ENCODE measurements at regions of chr12 and their contacts with region 1.

Region 1: GRCh38 chr12:53675651-53676453 is at the start of gene ATP5MC2:
- DNase-seq: peak; percentile 97 to 98
- H3K4me3 ChIP-seq: peak within 1 kb of the TSS; percentile 41
- H3K4me3 Mint-ChIP-seq: peak within 1 kb of the TSS; percentile 82
- H3K27ac Mint-ChIP-seq: peak within 1 kb of the TSS; percentile 87
- H3K4me1 ChIP-seq: 0 out of 2 replicates have a peak, but pooled peaks cover 5% of the 10 kb centered on the region
- H3K4me1 Mint-ChIP-seq: no peaks in the 10 kb centered on the region
- H3K27me3 ChIP-seq: no peaks in the 10 kb centered on the region
- H3K27me3 Mint-ChIP-seq: no peaks in the 10 kb centered on the region
- CTCF ChIP-seq: peak; percentile 91 to 99
- total RNA-seq, gene ATP5MC2: 156 and 160 TPM in 2 replicates

Region 2: GRCh38 chr12:53402871-53403270 is 273.0 kb before region 1 on chr12:
- CTCF ChIA-PET with region 1: no interaction called
- POLR2A ChIA-PET with region 1: no interaction called
- intact Hi-C with region 1: no loop called
- DNase-seq: no peak
- H3K4me3 ChIP-seq: no peak overlapping the region
- H3K4me3 Mint-ChIP-seq: no peak overlapping the region
- H3K27ac Mint-ChIP-seq: no peak overlapping the region
- H3K4me1 ChIP-seq: no peaks in the 10 kb centered on the region
- H3K4me1 Mint-ChIP-seq: no peaks in the 10 kb centered on the region
- H3K27me3 ChIP-seq: no peaks in the 10 kb centered on the region
- H3K27me3 Mint-ChIP-seq: no peaks in the 10 kb centered on the region
- CTCF ChIP-seq: no peak

Region 3: GRCh38 chr12:53538196-53538689 is 137.6 kb before region 1 on chr12:
- CTCF ChIA-PET with region 1: interaction called, 43 read pairs
- POLR2A ChIA-PET with region 1: no interaction called
- intact Hi-C with region 1: loop called (anchors 1 kb)
- DNase-seq: peak; percentile 39 to 64
- H3K4me3 ChIP-seq: no peak overlapping the region
- H3K4me3 Mint-ChIP-seq: peak overlapping the region; percentile 18
- H3K27ac Mint-ChIP-seq: peak overlapping the region; percentile 69
- H3K4me1 ChIP-seq: peaks cover 19% of the 10 kb centered on the region
- H3K4me1 Mint-ChIP-seq: no peaks in the 10 kb centered on the region
- H3K27me3 ChIP-seq: no peaks in the 10 kb centered on the region
- H3K27me3 Mint-ChIP-seq: no peaks in the 10 kb centered on the region
- CTCF ChIP-seq: no peak

Region 4: GRCh38 chr12:53599579-53599978 is 76.3 kb before region 1 on chr12:
- CTCF ChIA-PET with region 1: no interaction called
- POLR2A ChIA-PET with region 1: no interaction called
- intact Hi-C with region 1: loop called (anchors 1 kb)
- DNase-seq: no peak
- H3K4me3 ChIP-seq: no peak overlapping the region
- H3K4me3 Mint-ChIP-seq: no peak overlapping the region
- H3K27ac Mint-ChIP-seq: no peak overlapping the region
- H3K4me1 ChIP-seq: no peaks in the 10 kb centered on the region
- H3K4me1 Mint-ChIP-seq: no peaks in the 10 kb centered on the region
- H3K27me3 ChIP-seq: no peaks in the 10 kb centered on the region
- H3K27me3 Mint-ChIP-seq: no peaks in the 10 kb centered on the region
- CTCF ChIP-seq: no peak

Region 5: DNA sequence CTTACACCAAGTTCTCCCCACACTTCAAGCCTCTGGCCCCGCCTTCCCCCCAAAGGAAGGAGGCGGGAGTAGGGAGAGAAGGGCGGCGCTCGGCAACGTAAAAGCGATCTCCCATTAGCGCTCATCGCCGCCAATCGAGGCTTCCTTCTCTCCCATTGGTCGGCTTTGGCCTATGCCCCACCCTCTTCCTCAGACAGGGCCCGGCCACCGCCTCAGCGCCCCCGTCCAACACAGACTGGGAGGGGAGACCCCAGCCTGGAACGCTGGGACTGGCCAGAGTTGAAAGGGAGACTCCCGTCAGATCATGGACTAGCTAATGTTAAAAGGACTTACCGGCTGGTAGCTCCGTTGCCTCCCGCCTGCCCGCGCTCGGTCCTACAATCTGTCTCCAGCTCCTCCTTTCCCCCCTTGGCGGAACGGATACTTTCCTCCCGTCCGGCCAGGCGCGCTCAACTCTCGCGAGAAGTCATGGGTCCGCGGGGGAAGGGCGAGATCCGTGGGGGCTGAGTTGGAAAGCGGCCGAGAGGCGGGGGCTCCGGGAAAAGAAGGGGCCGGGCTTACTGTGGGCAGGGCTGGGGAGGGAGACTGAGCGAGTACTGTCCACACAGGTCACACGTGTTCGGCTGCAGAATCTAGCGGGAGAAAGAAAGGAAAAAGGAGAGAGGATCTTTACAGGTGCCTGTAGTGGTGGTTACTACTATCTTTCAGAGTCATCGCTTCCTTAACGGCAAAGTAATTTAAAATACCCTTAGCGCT is 49.7 kb before region 1 on chr12 and contains the start of gene ATF7:
- CTCF ChIA-PET with region 1: interaction called, 14 read pairs
- POLR2A ChIA-PET with region 1: interaction called, 8 read pairs
- intact Hi-C with region 1: loop called (anchors 1 kb)
- DNase-seq: peak; percentile 98 to 99
- H3K4me3 ChIP-seq: peak within 1 kb of the TSS; percentile 73
- H3K4me3 Mint-ChIP-seq: peak within 1 kb of the TSS; percentile 100
- H3K27ac Mint-ChIP-seq: peak within 1 kb of the TSS; percentile 91
- H3K4me1 ChIP-seq: peaks cover 12% of the 10 kb centered on the region
- H3K4me1 Mint-ChIP-seq: peaks cover 27% of the 10 kb centered on the region
- H3K27me3 ChIP-seq: no peaks in the 10 kb centered on the region
- H3K27me3 Mint-ChIP-seq: no peaks in the 10 kb centered on the region
- CTCF ChIP-seq: no peak
- total RNA-seq, gene ATF7: 26.9 and 28.7 TPM in 2 replicates

Region 6: GRCh38 chr12:53696285-53696654 is 20.4 kb after region 1 on chr12:
- CTCF ChIA-PET with region 1: no interaction called
- POLR2A ChIA-PET with region 1: no interaction called
- intact Hi-C with region 1: loop called (anchors 1 kb)
- DNase-seq: peak; percentile 86 to 90
- H3K4me3 ChIP-seq: peak overlapping the region; percentile 41
- H3K4me3 Mint-ChIP-seq: peak overlapping the region; percentile 61
- H3K27ac Mint-ChIP-seq: no peak overlapping the region
- H3K4me1 ChIP-seq: no peaks in the 10 kb centered on the region; the same call in 1 of the 2 replicates
- H3K4me1 Mint-ChIP-seq: peaks cover 9% of the 10 kb centered on the region
- H3K27me3 ChIP-seq: no peaks in the 10 kb centered on the region
- H3K27me3 Mint-ChIP-seq: peaks cover 28% of the 10 kb centered on the region
- CTCF ChIP-seq: no peak

Region 7: GRCh38 chr12:53775478-53776145 is 99.8 kb after region 1 on chr12:
- CTCF ChIA-PET with region 1: no interaction called
- POLR2A ChIA-PET with region 1: no interaction called
- intact Hi-C with region 1: no loop called
- DNase-seq: no peak
- H3K4me3 ChIP-seq: no peak overlapping the region
- H3K4me3 Mint-ChIP-seq: no peak overlapping the region
- H3K27ac Mint-ChIP-seq: no peak overlapping the region
- H3K4me1 ChIP-seq: no peaks in the 10 kb centered on the region
- H3K4me1 Mint-ChIP-seq: peaks cover 11% of the 10 kb centered on the region
- H3K27me3 ChIP-seq: no peaks in the 10 kb centered on the region
- H3K27me3 Mint-ChIP-seq: peaks cover 6% of the 10 kb centered on the region
- CTCF ChIP-seq: no peak